ENCODE measurements at regions of chr6 and their contacts with region 1.

Region 1: GRCh38 chr6:36678518-36679027 is at the start of gene CDKN1A:
- DNase-seq: peak; percentile 56 to 93 (median 83)

Region 2: DNA sequence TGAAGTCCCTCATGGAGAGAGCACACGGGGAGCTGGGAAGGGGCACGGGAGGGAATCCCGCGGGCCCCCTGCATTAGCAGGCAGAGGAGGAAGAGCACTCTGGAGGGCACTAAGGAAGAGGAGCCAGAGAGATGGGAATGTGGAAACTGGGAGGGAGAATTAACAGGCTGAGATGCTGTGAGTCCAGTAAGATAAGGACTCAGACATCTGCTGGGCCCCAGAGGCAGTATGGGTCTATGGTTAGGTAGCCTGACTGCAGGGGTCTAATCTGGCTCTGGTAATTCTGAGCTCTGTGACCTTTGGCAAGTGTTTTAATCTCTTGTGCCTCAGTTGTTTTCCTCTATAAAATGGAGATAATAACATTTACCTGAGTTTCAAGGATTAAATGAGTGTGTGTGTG is 100.1 kb before region 1 on chr6:
- intact Hi-C with region 1: no loop called
- DNase-seq: no peak

Region 3: GRCh38 chr6:36759148-36759759 is 80.7 kb after region 1 on chr6:
- intact Hi-C with region 1: loop called (anchors 5 kb)
- DNase-seq: peak; percentile 68 to 93 (median 86)